ENCODE measurements at regions of chr21 and their contacts with region 1.

Region 1: DNA sequence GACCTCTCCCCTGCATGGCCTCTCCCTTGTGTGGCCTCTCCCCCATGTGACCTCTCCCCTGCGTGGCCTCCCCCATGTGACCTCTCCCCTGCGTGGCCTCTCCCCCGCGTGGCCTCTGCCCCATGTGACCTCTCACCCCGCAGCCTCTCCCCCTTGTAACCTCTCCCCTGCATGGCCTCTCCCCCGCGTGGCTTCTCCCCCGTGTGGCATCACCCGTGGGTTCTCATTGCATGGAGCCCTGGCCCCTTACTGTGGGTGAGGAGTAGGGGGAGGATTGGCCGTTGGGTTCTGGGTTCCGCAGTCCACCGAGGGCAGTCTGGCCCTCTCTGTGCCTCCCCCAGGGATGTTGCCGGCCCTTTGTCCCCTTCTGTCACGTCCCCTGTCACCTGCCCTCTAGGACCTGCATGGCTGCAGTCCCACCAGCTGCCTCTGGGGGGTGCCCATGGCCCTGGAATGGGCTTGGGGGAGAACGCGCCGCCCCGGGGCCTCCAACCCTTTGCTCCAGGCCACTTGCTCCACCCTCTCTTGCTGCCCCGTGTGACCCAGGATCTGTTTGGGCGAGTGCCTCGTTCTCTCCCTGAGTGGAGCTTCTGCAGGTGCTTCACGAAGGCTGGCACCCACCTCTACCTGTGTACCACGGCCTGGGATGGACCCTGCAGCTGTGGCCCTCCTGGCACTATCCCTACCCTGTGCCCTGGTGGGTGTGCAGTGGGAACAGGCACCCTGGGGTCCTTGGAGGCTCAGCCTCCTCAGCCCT is 21.3 kb downstream of the RRP1 start:
- DNase-seq: peak; percentile 88 to 89
- ATAC-seq: peak; percentile 81 to 91 (median 86)
- H3K4me3 ChIP-seq: peak overlapping the region in 5 of 10 donors; percentile 6 to 47 (median 23)
- H3K27ac ChIP-seq: peak overlapping the region in 1 of 10 donors; percentile 48
- H3K4me1 ChIP-seq: peaks cover 3 to 30% (median 12%) of the 10 kb centered on the region in 9 donors
- H3K27me3 ChIP-seq: no peaks in the 10 kb centered on the region
- CTCF ChIP-seq: peak; percentile 88 to 97 (median 95)

Region 2: DNA sequence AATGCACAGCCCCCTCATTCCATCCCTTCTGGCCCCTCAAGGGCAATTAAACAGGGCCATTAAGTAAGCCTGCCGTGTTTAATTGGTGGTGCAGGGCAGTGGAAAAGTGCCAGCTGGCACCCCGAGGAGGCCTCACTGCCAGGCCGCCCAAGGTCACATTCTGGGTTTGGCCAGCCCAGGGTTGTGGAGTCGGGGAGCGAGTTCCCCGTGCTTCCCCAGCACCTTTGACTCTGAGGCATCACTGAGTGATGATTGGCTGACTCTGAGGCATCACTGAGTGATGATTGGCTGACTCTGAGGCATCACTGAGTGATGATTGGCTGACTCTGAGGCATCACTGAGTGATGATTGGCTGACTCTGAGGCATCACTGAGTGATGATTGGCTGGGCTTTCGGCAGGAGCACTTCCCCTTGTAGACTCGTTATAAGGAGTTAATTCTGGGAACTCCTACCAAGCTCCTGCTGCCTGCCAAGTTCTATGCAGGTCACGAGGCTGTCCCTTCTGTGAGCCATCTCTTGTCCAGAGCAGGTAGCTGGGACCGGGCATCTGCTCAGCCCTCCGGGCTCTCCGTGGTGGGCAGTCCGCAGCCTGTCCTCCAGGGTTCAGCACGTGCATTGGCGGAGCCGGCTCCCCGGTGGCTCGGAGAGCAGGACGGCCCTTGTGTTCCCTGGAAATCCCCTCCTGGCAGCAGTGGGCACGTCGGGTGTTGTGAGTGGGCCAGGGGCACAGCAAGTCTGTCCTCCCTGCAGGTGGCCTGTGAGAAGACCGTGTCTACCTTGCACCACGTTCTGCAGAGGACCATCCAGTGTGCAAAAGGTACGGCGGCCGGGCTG is 55.5 kb before region 1 on chr21:
- intact Hi-C with region 1: no loop called
- DNase-seq: peak in 1 of 2 donors; percentile 45
- ATAC-seq: peak in 7 of 8 donors; percentile 24 to 68 (median 41)
- H3K4me3 ChIP-seq: no peak overlapping the region
- H3K27ac ChIP-seq: peak overlapping the region in 1 of 10 donors; percentile 37
- H3K4me1 ChIP-seq: peaks cover 0 to 22% (median 3%) of the 10 kb centered on the region in 9 donors
- H3K27me3 ChIP-seq: no peaks in the 10 kb centered on the region
- CTCF ChIP-seq: no peak

Region 3: DNA sequence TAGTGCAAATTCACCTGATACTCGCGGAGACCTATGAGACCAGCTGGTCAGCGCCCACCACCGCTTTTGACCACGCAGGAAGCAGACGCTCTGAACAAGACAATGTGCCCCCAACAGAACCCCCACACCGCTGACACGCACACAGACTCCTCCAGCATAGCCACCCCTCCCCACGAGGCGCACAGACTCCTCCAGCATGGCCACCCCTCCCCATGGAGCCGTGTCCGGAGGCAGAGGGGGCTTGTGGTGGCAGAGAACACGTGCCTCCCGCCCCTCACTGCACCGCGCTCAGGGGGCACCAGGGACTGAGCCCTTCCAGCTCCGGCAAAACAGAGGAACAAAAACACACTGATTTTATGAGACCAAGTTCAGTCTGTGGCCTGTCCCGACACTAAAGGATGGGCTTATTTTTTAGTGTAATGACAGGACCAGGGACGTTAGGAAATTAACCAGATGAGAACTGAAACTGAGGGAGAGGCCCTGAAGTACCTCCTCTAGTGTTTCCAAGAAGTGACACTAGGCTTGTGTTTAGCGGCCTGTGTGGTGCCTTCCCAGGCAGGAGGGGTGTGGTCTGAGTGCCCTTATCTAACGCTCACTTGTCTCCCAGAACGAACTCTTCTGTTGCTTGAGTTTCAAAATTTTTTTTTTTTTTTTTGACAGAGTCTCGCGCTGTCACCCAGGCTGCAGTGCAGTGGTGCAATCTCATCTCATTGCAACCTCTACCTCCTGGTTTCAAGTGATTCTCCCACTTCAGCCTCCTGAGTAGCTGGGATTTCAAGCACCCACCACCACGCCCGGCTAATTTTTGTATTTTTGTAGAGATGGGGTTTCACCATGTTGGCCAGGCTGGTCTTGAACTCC is 44.3 kb after region 1 on chr21:
- intact Hi-C with region 1: loop called in 2 of 10 experiments (anchors 5 to 10 kb)
- DNase-seq: no peak
- ATAC-seq: peak in 2 of 8 donors; percentile 41 to 56
- H3K4me3 ChIP-seq: no peak overlapping the region
- H3K27ac ChIP-seq: peak overlapping the region in 1 of 10 donors; percentile 40
- H3K4me1 ChIP-seq: peaks cover 0 to 17% (median 1%) of the 10 kb centered on the region in 9 donors
- H3K27me3 ChIP-seq: no peaks in the 10 kb centered on the region
- CTCF ChIP-seq: no peak

Region 4: GRCh38 chr21:43938751-43939442 is 128.2 kb after region 1 on chr21:
- intact Hi-C with region 1: loop called in 7 of 10 experiments (anchors 2 to 10 kb)
- DNase-seq: peak; percentile 78 to 83
- ATAC-seq: peak; percentile 81 to 95 (median 89)
- H3K4me3 ChIP-seq: peak overlapping the region in 8 of 10 donors; percentile 13 to 54 (median 48)
- H3K27ac ChIP-seq: peak overlapping the region in 8 of 10 donors; percentile 3 to 61 (median 50)
- H3K4me1 ChIP-seq: peaks cover 5 to 45% (median 27%) of the 10 kb centered on the region in 9 donors
- H3K27me3 ChIP-seq: no peaks in the 10 kb centered on the region
- CTCF ChIP-seq: peak; percentile 90 to 100 (median 96)

Region 5: GRCh38 chr21:43975495-43975993 is 164.9 kb after region 1 on chr21:
- intact Hi-C with region 1: loop called in 7 of 10 experiments (anchors 1 to 5 kb)
- DNase-seq: peak; percentile 73 to 80
- ATAC-seq: peak; percentile 75 to 84 (median 78)
- H3K4me3 ChIP-seq: no peak overlapping the region
- H3K27ac ChIP-seq: no peak overlapping the region
- H3K4me1 ChIP-seq: peaks cover 0 to 13% (median 0%) of the 10 kb centered on the region in 9 donors
- H3K27me3 ChIP-seq: no peaks in the 10 kb centered on the region
- CTCF ChIP-seq: peak; percentile 89 to 96 (median 93)

Region 6: DNA sequence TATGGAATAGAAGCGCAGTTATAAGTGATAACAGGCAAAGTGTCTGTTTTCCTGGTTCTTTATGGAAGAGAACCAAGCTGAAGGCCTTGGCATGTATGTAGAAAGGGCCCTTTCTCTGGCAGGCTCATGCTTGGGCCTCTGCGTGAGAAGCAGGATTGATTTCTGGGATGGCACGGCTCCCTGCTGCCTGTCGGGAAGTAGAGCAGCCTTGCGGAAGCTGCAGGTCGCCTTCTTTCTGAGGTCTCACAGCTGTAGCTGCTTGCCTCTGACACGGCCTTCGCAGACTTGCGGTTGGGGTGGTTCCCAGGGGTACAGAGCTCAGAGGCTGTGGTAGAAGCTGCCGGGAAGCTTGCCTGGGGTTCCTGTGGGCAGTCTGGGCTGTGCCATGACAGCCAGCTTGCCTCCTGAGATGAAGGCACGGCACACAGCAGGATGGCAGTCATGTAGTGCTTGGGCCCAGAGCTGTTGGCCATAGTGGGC is 240.8 kb after region 1 on chr21:
- intact Hi-C with region 1: loop called in 1 of 10 experiments (anchors 10 kb)
- DNase-seq: peak; percentile 34 to 51
- ATAC-seq: peak; percentile 52 to 79 (median 70)
- H3K4me3 ChIP-seq: no peak overlapping the region
- H3K27ac ChIP-seq: peak overlapping the region; percentile 21 to 78 (median 58)
- H3K4me1 ChIP-seq: peaks cover 8 to 54% (median 26%) of the 10 kb centered on the region in 9 donors
- H3K27me3 ChIP-seq: no peaks in the 10 kb centered on the region
- CTCF ChIP-seq: no peak

Region 7: GRCh38 chr21:44556879-44557278 is 746.2 kb after region 1 on chr21:
- intact Hi-C with region 1: no loop called
- DNase-seq: no peak
- ATAC-seq: no peak
- H3K4me3 ChIP-seq: no peak overlapping the region
- H3K27ac ChIP-seq: no peak overlapping the region
- H3K4me1 ChIP-seq: no peaks in the 10 kb centered on the region
- H3K27me3 ChIP-seq: peaks cover 0 to 61% (median 48%) of the 10 kb centered on the region in 7 donors
- CTCF ChIP-seq: no peak